ENCODE measurements at regions of chr2 and their contacts with region 1.

Region 1: GRCh38 chr2:55026202-55026601 is 24.0 kb downstream of the RTN4 start:
- DNase-seq: no peak
- ATAC-seq: peak; percentile 15
- H3K4me3 ChIP-seq: no peak overlapping the region
- H3K27ac ChIP-seq: no peak overlapping the region
- H3K4me1 ChIP-seq: peaks cover 21% of the 10 kb centered on the region
- H3K27me3 ChIP-seq: no peaks in the 10 kb centered on the region
- CTCF ChIP-seq: no peak
- POLR2A ChIP-seq: no peak

Region 2: DNA sequence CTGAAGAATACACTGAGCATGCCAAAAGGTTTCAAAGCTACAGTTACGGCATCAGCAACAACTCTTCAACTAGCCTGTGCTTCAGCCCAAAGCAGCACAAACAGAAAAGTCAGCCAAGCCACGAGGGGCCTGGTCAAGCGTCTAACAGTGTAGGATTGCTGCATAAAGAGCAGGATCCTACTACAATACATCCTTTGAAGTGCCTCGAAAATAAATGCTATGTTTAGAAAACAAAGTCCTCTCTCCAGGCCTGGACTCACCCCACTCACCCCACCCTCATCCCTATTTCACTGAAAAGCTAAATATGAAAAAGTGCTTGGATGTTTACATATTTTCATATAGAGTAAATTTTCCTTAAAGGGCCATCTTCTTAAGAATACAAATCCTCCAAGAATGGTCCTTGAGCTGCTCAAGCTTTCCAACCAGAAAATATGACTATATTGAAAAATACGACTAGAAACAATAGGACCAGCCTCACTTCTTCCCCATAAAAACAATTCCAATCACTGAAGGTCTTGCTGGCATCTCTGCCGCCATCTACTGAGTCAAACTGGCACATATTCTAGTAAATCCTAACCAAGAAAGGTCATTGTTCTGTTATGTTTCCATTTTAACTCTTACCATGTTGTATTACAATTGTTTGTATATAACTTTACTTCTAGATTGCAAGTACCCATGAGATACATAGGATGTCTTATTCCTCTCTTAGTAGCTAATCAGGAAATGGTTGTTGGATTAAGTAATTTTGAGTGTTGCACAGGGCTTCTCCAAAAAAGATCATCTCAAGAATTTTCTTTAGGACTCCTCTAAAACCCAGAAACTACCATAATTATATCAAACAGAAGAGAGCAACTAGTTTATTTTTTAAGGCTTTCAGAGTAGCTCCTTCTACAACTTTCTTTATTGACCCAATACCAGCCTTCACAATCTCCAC is 142.3 kb after region 1 on chr2:
- intact Hi-C with region 1: loop called (anchors 10 kb)
- DNase-seq: peak; percentile 62 to 79 (median 67)
- ATAC-seq: peak; percentile 64
- H3K4me3 ChIP-seq: no peak overlapping the region
- H3K27ac ChIP-seq: peak overlapping the region; percentile 43 to 58 (median 55)
- H3K4me1 ChIP-seq: peaks cover 75% of the 10 kb centered on the region
- H3K27me3 ChIP-seq: no peaks in the 10 kb centered on the region
- CTCF ChIP-seq: peak; percentile 33 to 90 (median 76)
- POLR2A ChIP-seq: no peak